Psoas muscle (tissue), 8 donors: ENCODE measurements at regions of chr2 and their contacts with region 1.

Region 1: GRCh38 chr2:42072349-42073118 is 24.7 kb downstream of the PKDCC start:
- DNase-seq: peak; percentile 82 to 95
- ATAC-seq: peak; percentile 91 to 95 (median 93)
- H3K4me3 ChIP-seq: no peak overlapping the region
- H3K27ac ChIP-seq: peak overlapping the region; percentile 89
- H3K4me1 ChIP-seq: peaks cover 35% of the 10 kb centered on the region
- H3K27me3 ChIP-seq: no peaks in the 10 kb centered on the region
- CTCF ChIP-seq: peak; percentile 25

Region 2: GRCh38 chr2:41922177-41922576 is 150.4 kb before region 1 on chr2:
- intact Hi-C with region 1: loop called (anchors 5 kb)
- DNase-seq: no peak
- ATAC-seq: peak; percentile 56 to 68 (median 61)
- H3K4me3 ChIP-seq: no peak overlapping the region
- H3K27ac ChIP-seq: peak overlapping the region; percentile 76
- H3K4me1 ChIP-seq: peaks cover 45% of the 10 kb centered on the region
- H3K27me3 ChIP-seq: no peaks in the 10 kb centered on the region
- CTCF ChIP-seq: no peak

Region 3: DNA sequence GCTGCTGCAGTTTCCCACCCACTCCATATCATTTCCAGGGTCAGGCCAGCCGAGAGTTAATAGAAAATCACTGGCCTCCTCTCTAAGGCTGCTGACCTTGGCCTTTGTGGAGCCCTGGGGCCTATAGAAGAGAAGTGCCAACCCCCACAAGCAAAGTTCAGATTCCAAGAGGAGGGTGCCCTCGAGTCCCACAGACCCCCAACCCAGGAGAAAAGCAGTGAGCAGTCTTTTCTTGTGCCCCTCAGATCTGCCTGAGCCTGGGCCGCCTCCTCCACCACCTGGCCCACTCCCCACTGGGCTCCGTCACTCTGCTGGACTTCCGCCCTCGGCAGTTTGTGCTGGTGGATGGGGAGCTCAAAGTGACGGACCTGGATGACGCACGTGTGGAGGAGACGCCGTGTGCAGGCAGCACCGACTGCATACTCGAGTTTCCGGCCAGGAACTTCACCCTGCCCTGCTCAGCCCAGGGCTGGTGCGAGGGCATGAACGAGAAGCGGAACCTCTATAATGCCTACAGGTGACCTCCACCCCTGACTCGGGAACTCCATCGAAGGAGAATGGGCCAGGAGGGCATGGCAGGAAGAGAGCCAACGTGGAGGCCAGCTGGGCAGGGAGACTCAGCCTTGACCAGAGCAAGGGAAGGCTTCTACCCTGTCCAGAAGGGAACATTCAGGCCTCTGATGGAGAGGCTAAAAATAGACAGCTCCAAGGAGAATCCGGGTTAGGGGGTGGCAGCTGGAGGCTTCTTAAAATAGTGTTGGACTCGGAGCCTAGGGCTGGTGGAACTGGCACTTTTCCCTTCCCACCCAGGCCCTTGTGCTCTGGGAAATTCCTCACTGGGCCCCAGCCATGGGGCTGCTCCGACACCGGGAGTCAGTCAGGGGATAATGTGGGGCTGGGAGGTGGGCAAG is 18.5 kb before region 1 on chr2:
- intact Hi-C with region 1: loop called in 1 of 2 experiments (anchors 2 kb)
- DNase-seq: peak; percentile 68 to 89
- ATAC-seq: peak; percentile 80 to 90 (median 84)
- H3K4me3 ChIP-seq: peak overlapping the region; percentile 95
- H3K27ac ChIP-seq: peak overlapping the region; percentile 94
- H3K4me1 ChIP-seq: peaks cover 82% of the 10 kb centered on the region
- H3K27me3 ChIP-seq: no peaks in the 10 kb centered on the region
- CTCF ChIP-seq: no peak